ENCODE measurements at regions of chr11 and their contacts with region 1.

Region 1: GRCh38 chr11:82867495-82868082 is 32.6 kb downstream of the PRCP start:
- DNase-seq: peak; percentile 50 to 72
- ATAC-seq: peak; percentile 40 to 73; a peak in 3 of 6 replicates
- H3K4me3 ChIP-seq: 0 out of 3 replicates have a peak overlapping the region, but pooled peaks have one; percentile 17
- H3K27ac ChIP-seq: 0 out of 6 replicates have a peak overlapping the region, but pooled peaks of 1 of the 2 experiments have one; percentile 52
- H3K4me1 ChIP-seq: peaks cover 9% of the 10 kb centered on the region
- CTCF ChIP-seq: peak; percentile 86
- EP300 ChIP-seq: no peak
- POLR2A ChIP-seq: no peak
- RAD21 ChIP-seq: peak; percentile 75 to 82

Region 2: GRCh38 chr11:82718307-82718706 is 149.3 kb before region 1 on chr11:
- CTCF ChIA-PET with region 1: interaction called, 51 read pairs
- POLR2A ChIA-PET with region 1: no interaction called
- DNase-seq: peak; percentile 42 to 61
- ATAC-seq: peak; percentile 75 to 89
- H3K4me3 ChIP-seq: no peak overlapping the region
- H3K27ac ChIP-seq: no peak overlapping the region
- H3K4me1 ChIP-seq: no peaks in the 10 kb centered on the region
- CTCF ChIP-seq: peak; percentile 86
- EP300 ChIP-seq: no peak
- POLR2A ChIP-seq: no peak
- RAD21 ChIP-seq: peak; percentile 85 to 89

Region 3: GRCh38 chr11:82883853-82884252 is 16.3 kb after region 1 on chr11:
- CTCF ChIA-PET with region 1: interaction called, 25 read pairs
- POLR2A ChIA-PET with region 1: no interaction called
- DNase-seq: no peak
- ATAC-seq: no peak
- H3K4me3 ChIP-seq: no peak overlapping the region
- H3K27ac ChIP-seq: no peak overlapping the region
- H3K4me1 ChIP-seq: no peaks in the 10 kb centered on the region
- CTCF ChIP-seq: no peak
- EP300 ChIP-seq: no peak
- POLR2A ChIP-seq: no peak
- RAD21 ChIP-seq: no peak

Region 4: DNA sequence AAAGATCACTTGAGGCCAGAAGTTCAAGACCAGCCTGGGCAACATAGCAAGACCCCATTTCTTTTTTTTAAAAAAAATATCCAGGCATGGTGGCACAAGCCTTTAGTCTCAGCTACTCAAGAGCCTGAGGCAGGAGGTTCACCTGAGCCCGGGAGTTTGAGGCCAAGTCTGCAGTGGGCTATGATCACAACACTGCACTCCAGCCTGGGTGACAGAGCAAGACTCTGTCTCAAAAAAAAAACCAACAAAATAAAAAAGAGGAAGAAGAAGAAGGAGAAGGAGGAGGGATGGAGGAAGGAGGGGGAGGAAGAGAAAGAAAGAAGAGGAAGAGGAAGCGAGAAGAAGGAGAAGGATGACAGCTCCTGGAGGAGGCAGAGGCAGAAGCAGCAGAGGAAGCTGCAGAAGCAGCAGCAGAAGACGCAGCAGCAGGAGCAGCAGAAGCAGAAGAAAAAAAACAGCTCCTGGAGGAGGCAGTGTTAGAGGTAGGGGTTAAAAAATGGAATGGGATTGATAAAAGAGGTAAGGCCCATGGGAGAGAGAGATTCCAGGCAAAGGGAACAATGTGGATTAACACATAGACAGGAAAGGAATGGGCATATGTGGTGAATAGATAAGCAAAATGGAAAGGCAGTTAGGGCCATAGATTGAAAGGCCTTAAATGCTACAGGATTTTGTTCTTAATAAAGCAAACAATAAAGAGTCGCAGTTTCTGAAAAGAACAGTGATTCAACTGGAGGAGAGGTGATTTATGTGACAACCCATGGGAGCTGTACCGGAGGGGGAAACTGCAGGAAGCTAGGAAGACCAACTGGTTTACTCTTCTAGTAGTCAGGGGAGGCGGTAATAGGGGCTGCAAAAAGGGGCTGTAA is 21.8 kb after region 1 on chr11:
- CTCF ChIA-PET with region 1: interaction called, 25 read pairs
- POLR2A ChIA-PET with region 1: no interaction called
- DNase-seq: no peak
- ATAC-seq: no peak
- H3K4me3 ChIP-seq: no peak overlapping the region
- H3K27ac ChIP-seq: no peak overlapping the region
- H3K4me1 ChIP-seq: no peaks in the 10 kb centered on the region
- CTCF ChIP-seq: no peak
- EP300 ChIP-seq: no peak
- POLR2A ChIP-seq: no peak
- RAD21 ChIP-seq: no peak

Region 5: DNA sequence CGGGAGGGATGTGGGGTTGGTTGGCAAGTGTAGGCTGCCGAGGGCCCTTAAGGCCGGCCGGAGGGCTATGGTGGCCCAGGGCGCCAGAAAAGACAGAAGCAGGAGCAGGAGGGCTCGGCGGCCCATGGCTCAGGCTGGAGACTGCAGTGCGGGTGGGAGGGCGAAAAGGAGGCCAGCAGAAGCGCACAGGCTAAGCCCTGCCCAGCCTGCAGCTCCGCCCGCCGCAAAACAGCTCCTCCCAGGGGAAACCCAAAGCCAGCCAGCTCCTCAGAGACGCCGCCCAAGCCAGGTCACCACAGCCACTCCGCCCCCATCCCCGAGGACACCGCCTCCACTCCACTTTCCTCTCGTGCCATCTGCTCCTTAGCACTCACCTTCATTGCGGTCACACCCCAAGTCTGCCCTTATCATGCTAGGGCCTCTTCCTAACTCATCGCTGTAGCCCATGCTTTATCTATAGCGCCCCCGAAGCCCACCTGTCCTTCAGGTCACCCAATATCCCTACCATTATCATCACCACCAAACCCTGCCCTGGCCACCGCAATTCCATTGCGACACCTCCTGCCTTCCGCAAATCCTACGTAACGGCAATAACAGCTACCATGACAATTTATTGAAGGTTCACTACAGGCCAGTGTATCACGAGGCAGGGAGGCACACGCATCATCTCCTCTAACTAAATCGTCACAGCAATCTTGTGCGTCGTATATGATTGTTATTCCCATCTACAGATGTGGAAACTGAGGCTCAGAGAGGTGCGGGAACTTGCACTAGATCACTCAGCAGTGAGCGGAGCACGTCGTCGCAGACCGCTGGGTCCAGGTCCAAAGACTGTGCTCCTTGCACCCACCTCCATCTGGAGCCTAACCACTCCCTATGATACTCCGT is 32.9 kb after region 1 on chr11 and contains the start of gene PRCP:
- CTCF ChIA-PET with region 1: interaction called, 32 read pairs
- POLR2A ChIA-PET with region 1: interaction called, 4 read pairs
- DNase-seq: peak; percentile 91 to 94
- ATAC-seq: peak; percentile 90 to 95
- H3K4me3 ChIP-seq: peak within 1 kb of the TSS; percentile 72
- H3K27ac ChIP-seq: peak within 1 kb of the TSS; percentile 81 to 93
- H3K4me1 ChIP-seq: peaks cover 13% of the 10 kb centered on the region
- CTCF ChIP-seq: no peak
- EP300 ChIP-seq: no peak
- POLR2A ChIP-seq: peak; percentile 83
- RAD21 ChIP-seq: no peak; a peak in 1 of 5 replicates
- polyA plus RNA-seq, gene PRCP: 86.0 and 86.2 TPM in 2 replicates

Region 6: DNA sequence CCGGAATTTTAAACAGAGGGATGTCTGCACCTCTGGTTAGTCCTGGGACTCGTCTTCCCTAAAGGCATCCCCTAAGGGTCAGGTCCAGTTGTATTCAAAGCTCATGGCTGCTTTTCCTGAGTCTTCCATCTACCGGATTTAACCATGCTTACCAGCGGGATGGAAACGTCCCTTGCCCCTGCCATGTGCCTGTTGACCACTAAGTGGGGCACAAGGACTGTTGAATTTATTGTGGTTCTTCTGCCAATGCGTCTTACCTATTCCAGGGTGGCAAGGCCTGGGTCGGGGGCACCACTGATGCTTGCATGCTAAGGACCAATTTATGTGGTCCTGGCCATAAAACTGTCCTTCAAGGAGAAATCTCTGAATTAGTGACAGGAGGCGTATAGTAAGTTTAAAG is 351.5 kb after region 1 on chr11:
- CTCF ChIA-PET with region 1: no interaction called
- POLR2A ChIA-PET with region 1: no interaction called
- DNase-seq: peak in 1 of 2 experiments; percentile 27
- ATAC-seq: peak; percentile 77 to 78; a peak in 5 of 6 replicates
- H3K4me3 ChIP-seq: no peak overlapping the region
- H3K27ac ChIP-seq: no peak overlapping the region
- H3K4me1 ChIP-seq: no peaks in the 10 kb centered on the region
- CTCF ChIP-seq: peak; percentile 17; the same call in 2 of the 3 replicates
- EP300 ChIP-seq: no peak
- POLR2A ChIP-seq: no peak
- RAD21 ChIP-seq: peak; percentile 25 to 50; a peak in 2 of 5 replicates

Region 7: GRCh38 chr11:83249972-83250593 is 382.5 kb after region 1 on chr11:
- CTCF ChIA-PET with region 1: interaction called, 21 read pairs
- POLR2A ChIA-PET with region 1: no interaction called
- DNase-seq: peak; percentile 36 to 58
- ATAC-seq: peak; percentile 79 to 93; a peak in 4 of 6 replicates
- H3K4me3 ChIP-seq: no peak overlapping the region
- H3K27ac ChIP-seq: no peak overlapping the region
- H3K4me1 ChIP-seq: no peaks in the 10 kb centered on the region
- CTCF ChIP-seq: peak; percentile 77
- EP300 ChIP-seq: no peak
- POLR2A ChIP-seq: no peak
- RAD21 ChIP-seq: peak; percentile 65 to 66

Region 8: GRCh38 chr11:83819933-83820549 is 952.5 kb after region 1 on chr11:
- CTCF ChIA-PET with region 1: interaction called, 23 read pairs
- POLR2A ChIA-PET with region 1: no interaction called
- DNase-seq: peak; percentile 41 to 57
- ATAC-seq: peak; percentile 64 to 87; a peak in 5 of 6 replicates
- H3K4me3 ChIP-seq: no peak overlapping the region
- H3K27ac ChIP-seq: no peak overlapping the region
- H3K4me1 ChIP-seq: no peaks in the 10 kb centered on the region
- CTCF ChIP-seq: peak; percentile 86
- EP300 ChIP-seq: no peak
- POLR2A ChIP-seq: no peak
- RAD21 ChIP-seq: peak; percentile 85 to 86